AG04449 (cell line): ENCODE measurements at regions of chr19 and their contacts with region 1.

Region 1: GRCh38 chr19:12965017-12965811 is 4.2 kb upstream of the DAND5 start:
- DNase-seq: no peak
- H3K4me3 ChIP-seq: peak overlapping the region; percentile 63
- CTCF ChIP-seq: peak; percentile 100

Region 2: DNA sequence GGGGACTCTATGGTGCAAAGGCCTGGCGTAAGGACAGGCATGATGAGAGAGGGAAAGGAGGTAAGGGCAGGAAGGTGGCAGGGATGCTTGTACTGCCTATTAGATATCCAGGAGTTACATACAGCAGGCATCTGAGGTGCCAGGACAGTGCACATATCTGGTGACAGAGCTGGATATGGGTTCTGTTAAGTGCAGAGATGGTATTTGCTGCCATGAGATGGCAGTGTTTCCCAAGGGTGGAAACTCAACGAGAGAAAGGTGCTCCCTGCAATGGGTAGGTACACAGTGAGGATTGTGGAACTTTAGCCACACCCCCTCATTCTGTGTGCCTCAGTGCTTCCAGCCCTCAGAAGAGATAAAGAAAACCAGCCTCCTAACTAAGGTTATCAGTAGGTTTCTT is 248.4 kb before region 1 on chr19:
- CTCF ChIA-PET with region 1: no interaction called
- POLR2A ChIA-PET with region 1: no interaction called
- DNase-seq: no peak
- H3K4me3 ChIP-seq: no peak overlapping the region
- CTCF ChIP-seq: peak; percentile 12

Region 3: GRCh38 chr19:12881172-12881808 is 83.9 kb before region 1 on chr19 and contains the start of gene DNASE2:
- CTCF ChIA-PET with region 1: interaction called, 21 read pairs
- POLR2A ChIA-PET with region 1: no interaction called
- DNase-seq: peak; percentile 31
- H3K4me3 ChIP-seq: peak within 1 kb of the TSS; percentile 75
- CTCF ChIP-seq: no peak

Region 4: DNA sequence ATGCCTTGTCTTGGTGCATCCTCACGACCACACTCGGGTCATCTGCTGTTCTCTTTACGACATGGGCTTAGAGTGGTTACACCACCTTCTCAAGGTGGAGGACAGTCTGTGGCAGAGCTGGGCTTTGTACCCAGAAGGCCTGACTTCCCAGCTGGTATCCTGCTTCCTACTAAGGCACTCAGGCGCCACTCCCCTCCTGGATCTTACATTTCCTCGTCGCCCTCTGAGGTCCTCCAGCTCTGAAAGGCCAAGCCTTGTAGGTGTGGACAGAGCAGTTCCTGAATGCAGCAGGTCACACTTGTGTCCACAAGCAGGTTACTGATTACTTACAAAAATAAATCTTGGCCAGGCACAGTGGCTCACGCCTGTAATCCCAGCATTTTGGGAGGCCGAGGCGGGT is 58.0 kb before region 1 on chr19:
- CTCF ChIA-PET with region 1: no interaction called
- POLR2A ChIA-PET with region 1: no interaction called
- DNase-seq: no peak
- H3K4me3 ChIP-seq: no peak overlapping the region
- CTCF ChIP-seq: no peak

Region 5: GRCh38 chr19:13044231-13044836 is 79.1 kb after region 1 on chr19:
- CTCF ChIA-PET with region 1: interaction called, 10 read pairs
- POLR2A ChIA-PET with region 1: no interaction called
- DNase-seq: no peak
- H3K4me3 ChIP-seq: no peak overlapping the region
- CTCF ChIP-seq: no peak

Region 6: GRCh38 chr19:13093407-13094105 is 128.3 kb after region 1 on chr19:
- CTCF ChIA-PET with region 1: interaction called, 153 read pairs
- POLR2A ChIA-PET with region 1: no interaction called
- DNase-seq: no peak
- H3K4me3 ChIP-seq: no peak overlapping the region
- CTCF ChIP-seq: peak; percentile 90

Region 7: DNA sequence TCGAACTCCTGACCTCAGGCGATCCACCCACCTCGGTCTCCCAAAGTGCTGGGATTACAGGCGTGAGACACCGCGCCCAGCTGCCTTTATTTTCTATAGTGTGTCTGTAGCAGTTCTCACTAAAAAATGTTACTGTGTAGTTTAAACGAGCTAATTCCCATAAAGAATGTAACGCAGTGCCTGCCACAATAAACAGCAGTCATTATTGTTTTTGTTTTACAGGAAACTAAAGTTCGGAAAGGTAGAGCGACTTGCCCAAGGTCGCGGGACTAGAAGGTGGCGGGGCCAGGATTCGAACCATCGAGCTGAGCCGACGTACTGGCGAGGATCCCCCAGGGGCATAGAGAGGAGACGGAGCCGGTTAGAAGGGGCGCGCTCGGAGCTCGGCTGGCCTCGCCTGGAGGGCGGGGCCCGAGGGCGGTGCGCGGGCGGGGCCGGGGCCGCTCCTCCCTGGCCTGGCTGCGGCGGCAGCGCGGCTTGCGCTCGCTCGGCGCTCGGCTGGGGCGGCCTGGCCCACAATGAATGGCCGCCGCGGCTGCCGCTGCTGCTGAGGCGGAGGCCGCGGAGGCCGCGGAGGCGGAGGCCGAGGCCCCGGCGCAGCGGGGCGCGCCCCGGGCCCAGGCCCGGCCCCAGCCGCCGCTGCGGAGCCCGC is 152.7 kb after region 1 on chr19 and contains the start of gene NACC1:
- CTCF ChIA-PET with region 1: interaction called, 10 read pairs
- POLR2A ChIA-PET with region 1: no interaction called
- DNase-seq: no peak
- H3K4me3 ChIP-seq: peak within 1 kb of the TSS; percentile 99
- CTCF ChIP-seq: no peak

Region 8: GRCh38 chr19:13255041-13255718 is 290.0 kb after region 1 on chr19:
- CTCF ChIA-PET with region 1: interaction called, 12 read pairs
- POLR2A ChIA-PET with region 1: no interaction called
- DNase-seq: no peak
- H3K4me3 ChIP-seq: no peak overlapping the region
- CTCF ChIP-seq: no peak